T-cell (primary cell): ENCODE measurements at regions of chr21 and their contacts with region 1.

Region 1: DNA sequence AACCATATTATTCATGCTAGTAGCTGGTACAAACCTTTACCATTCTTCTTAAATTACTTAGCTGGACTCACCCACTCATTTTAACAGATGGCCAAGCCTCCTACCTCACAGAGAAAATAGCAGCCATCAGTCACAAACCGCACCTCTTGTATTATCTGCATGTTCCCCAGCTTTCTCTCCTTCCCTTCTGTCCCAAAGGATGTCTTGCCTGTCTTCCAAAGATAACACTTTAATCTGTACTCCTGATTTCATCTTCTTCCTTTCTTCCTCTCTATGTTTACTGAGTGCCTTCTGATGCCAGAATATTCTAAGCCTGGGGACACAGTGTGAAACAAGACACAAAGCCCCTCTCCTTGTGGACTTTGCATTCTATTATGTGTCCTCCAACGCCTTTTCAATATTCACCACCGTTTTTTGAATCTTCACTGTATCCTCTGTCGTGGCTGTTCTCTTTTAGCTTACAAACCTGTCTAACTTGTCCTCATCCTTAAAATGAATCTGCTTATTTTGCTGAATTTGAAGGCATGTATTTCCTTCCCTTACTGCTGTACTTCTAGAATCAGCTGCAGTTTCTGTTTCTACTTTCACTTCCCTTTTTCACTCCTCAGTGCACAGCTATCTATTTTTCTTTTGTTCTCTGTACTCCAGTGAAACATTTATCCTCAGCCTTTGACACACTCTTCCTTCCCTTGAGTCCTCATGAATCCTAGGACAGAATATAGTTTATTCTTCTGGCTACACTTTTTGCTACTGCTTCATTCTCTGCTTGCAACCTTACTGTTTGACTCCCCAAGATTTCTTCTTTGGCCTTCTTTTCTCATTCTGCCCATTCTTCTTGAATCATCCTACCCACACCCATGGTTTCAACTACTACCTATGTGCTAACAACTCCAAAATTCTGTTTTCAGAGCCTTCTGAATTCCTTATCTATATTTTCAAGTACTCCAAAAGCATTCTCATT is 216.9 kb upstream of the SAMSN1 start:
- DNase-seq: peak in 1 of 35 experiments; percentile 26
- ATAC-seq: peak; percentile 72 to 84 (median 74)
- H3K4me3 ChIP-seq: no peak overlapping the region
- H3K4me3 Mint-ChIP-seq: no peak overlapping the region
- H3K27ac ChIP-seq: peak overlapping the region; percentile 23
- H3K27ac Mint-ChIP-seq: no peak overlapping the region
- H3K4me1 ChIP-seq: peaks cover 0 to 4% of the 10 kb centered on the region in 2 experiments
- H3K4me1 Mint-ChIP-seq: peaks cover 0 to 6% (median 6%) of the 10 kb centered on the region in 3 donors
- H3K27me3 ChIP-seq: no peaks in the 10 kb centered on the region
- H3K27me3 Mint-ChIP-seq: no peaks in the 10 kb centered on the region

Region 2: DNA sequence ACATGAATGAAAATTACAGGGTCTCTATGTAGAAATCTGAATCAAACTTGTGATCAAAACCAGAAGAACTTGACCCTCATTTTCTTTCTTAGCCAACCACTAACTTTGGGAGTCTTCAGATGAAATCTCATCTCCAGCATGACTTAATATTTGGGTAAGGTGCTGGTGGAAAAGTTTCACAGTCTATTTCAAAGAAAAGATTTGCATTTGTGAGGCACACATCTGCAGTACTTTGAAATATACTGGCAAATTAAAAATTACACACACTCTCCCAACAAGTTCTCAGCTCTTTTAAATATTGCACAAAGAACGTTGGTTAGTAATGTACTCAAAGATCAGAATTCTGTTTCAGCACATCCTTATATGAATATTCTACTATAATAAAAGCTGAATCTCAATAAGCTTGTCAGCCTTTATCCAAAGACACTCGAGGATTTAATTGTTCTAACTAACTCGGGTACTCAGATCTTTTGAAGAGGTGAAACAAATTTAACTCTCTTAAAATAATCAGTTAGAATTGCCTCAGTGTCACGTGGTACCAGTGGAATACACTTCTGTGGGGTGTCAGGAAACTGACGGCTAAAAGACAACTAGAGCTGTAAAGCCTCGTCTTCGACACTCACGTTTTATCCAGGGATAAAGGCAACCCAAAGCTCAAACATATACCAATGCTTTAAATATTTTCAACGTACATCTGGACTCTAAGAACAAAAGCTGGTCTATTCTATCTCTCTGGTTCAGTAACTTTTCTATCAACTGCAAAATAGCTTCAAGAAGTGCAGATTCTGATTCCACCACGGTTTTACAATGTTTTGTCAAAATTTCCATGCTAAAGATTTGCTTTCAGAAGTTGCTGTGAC is 235.9 kb before region 1 on chr21:
- CTCF ChIA-PET with region 1: no interaction called
- POLR2A ChIA-PET with region 1: interaction called in 1 of 2 experiments, 27 read pairs
- DNase-seq: peak in 1 of 35 experiments; percentile 38
- ATAC-seq: peak; percentile 50 to 60 (median 56)
- H3K4me3 ChIP-seq: peak overlapping the region in 1 of 2 donors; percentile 27
- H3K4me3 Mint-ChIP-seq: peak overlapping the region; percentile 59 to 67 (median 60)
- H3K27ac ChIP-seq: peak overlapping the region; percentile 56
- H3K27ac Mint-ChIP-seq: peak overlapping the region; percentile 49 to 75
- H3K4me1 ChIP-seq: peaks cover 20 to 26% of the 10 kb centered on the region in 2 experiments
- H3K4me1 Mint-ChIP-seq: peaks cover 66 to 73% (median 73%) of the 10 kb centered on the region in 3 donors
- H3K27me3 ChIP-seq: no peaks in the 10 kb centered on the region
- H3K27me3 Mint-ChIP-seq: no peaks in the 10 kb centered on the region

Region 3: GRCh38 chr21:14744368-14744767 is 18.6 kb before region 1 on chr21:
- CTCF ChIA-PET with region 1: no interaction called
- POLR2A ChIA-PET with region 1: no interaction called
- DNase-seq: no peak
- ATAC-seq: no peak
- H3K4me3 ChIP-seq: no peak overlapping the region
- H3K4me3 Mint-ChIP-seq: no peak overlapping the region
- H3K27ac ChIP-seq: no peak overlapping the region
- H3K27ac Mint-ChIP-seq: no peak overlapping the region
- H3K4me1 ChIP-seq: no peaks in the 10 kb centered on the region
- H3K4me1 Mint-ChIP-seq: no peaks in the 10 kb centered on the region
- H3K27me3 ChIP-seq: no peaks in the 10 kb centered on the region
- H3K27me3 Mint-ChIP-seq: peaks cover 4 to 6% of the 10 kb centered on the region in 2 donors